ENCODE measurements at regions of chr1 and their contacts with region 1.

Region 1: DNA sequence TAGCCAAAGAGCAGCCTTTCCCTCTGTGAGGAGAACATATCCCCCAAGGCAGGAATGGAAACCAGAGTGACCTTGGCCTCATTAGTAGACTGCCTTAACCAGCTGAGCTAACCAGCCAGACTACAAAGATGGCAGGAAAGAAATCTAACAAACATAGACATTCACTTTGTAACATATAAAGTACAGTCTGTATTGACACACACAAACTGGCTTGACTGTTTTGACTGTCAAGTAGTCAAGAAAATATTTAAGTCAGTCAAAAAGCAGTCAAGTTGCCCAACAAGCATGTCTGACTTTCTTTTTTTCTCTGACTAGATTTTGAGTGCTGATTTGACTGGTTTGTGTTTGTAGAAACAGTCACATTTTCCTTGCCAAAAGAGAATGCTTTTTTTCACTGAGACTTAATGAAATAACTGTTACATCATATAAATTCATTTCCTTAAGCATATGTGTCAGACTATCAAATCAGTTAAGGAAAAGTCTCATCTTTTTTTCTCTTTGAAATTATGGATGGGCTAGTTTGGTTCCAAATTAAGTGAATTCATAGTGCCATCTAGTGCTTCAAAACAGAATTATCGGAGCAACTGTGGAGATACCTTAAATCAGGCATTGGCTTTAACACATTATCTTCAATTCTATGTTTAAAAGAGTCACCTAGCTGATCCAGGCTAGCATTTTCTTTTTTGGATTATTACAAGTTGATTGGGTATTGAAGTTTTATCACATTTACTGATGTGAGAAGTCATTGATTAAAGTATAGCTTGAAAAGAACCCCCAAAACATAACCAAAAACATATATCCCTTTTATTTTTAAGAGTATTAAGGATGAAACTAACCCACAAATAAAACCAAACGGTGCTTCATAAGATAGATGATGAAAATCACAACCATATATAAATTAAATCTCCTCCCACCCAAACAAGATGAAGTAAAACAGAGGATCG is 75.0 kb downstream of the ATP6V1G3 start:
- DNase-seq: no peak
- H3K4me3 ChIP-seq: no peak overlapping the region
- H3K27ac ChIP-seq: no peak overlapping the region
- H3K4me1 ChIP-seq: no peaks in the 10 kb centered on the region
- H3K27me3 ChIP-seq: no peaks in the 10 kb centered on the region
- CTCF ChIP-seq: peak; percentile 59 to 82 (median 68)
- POLR2A ChIP-seq: no peak

Region 2: GRCh38 chr1:197614916-197615692 is 850.4 kb before region 1 on chr1:
- intact Hi-C with region 1: loop called in 1 of 2 experiments (anchors 10 kb)
- DNase-seq: peak in 6 of 7 donors; percentile 16 to 67 (median 40)
- H3K4me3 ChIP-seq: no peak overlapping the region
- H3K27ac ChIP-seq: no peak overlapping the region
- H3K4me1 ChIP-seq: no peaks in the 10 kb centered on the region
- H3K27me3 ChIP-seq: no peaks in the 10 kb centered on the region
- CTCF ChIP-seq: peak; percentile 28 to 64 (median 58)
- POLR2A ChIP-seq: no peak

Region 3: GRCh38 chr1:198556971-198557370 is 91.5 kb after region 1 on chr1:
- intact Hi-C with region 1: no loop called
- DNase-seq: peak in 6 of 7 donors; percentile 16 to 59 (median 38)
- H3K4me3 ChIP-seq: no peak overlapping the region
- H3K27ac ChIP-seq: no peak overlapping the region
- H3K4me1 ChIP-seq: no peaks in the 10 kb centered on the region
- H3K27me3 ChIP-seq: no peaks in the 10 kb centered on the region
- CTCF ChIP-seq: no peak
- POLR2A ChIP-seq: no peak

Measured in adrenal gland (tissue), 19 donors.